CD8-positive, alpha-beta T cell (primary cell): ENCODE measurements at regions of chr17 and their contacts with region 1.

Region 1: DNA sequence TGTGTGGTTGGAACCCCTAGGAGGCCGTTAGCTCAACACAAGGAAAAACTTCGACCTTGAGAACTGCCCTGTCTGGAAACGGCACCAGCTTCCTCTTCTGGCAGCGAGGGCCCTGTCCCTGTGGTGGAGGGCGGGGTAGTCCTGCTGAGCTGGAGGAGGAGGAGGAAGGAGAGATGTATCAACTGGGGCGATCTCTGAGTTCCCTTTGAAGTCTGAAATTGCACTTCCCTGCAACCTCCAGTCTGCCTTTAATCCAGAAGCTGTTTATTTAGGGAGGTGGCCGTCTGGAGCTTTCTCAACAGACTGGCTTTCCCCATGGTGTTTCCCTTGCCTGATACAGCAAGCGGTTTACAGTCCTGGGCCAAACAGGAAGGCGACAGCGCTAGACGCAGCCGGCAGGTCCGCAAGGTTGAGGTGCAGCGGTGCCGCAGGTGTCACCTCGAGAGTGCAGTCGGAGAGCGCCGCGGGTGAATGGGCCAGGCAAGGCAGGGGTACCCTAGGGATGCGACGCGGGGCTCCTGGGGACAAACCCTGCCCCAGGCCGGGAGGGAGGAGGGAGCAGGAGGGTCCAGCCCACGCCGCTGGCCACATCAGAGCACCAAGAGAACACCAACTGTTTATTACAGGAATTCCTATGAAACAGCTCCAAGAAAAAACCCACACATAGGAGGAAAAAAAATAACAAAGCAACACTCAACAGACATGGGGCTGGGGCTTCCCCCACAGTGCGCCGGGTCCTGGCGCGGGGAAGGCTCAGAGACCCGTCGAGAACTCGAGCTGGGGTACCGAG is 11.4 kb upstream of the MRPS23 start:
- DNase-seq: peak in 8 of 9 experiments; percentile 19 to 68 (median 41)
- ATAC-seq: peak; percentile 70
- H3K4me3 ChIP-seq: peak overlapping the region; percentile 34
- H3K4me3 Mint-ChIP-seq: peak overlapping the region; percentile 83
- H3K27ac ChIP-seq: no peak overlapping the region
- H3K27ac Mint-ChIP-seq: peak overlapping the region; percentile 41
- H3K4me1 ChIP-seq: peaks cover 11% of the 10 kb centered on the region
- H3K4me1 Mint-ChIP-seq: peaks cover 14% of the 10 kb centered on the region
- H3K27me3 ChIP-seq: peaks cover 0 to 7% of the 10 kb centered on the region in 2 experiments
- H3K27me3 Mint-ChIP-seq: peaks cover 10% of the 10 kb centered on the region
- CTCF ChIP-seq: no peak

Region 2: GRCh38 chr17:57735706-57736105 is 125.5 kb before region 1 on chr17:
- CTCF ChIA-PET with region 1: no interaction called
- POLR2A ChIA-PET with region 1: no interaction called
- intact Hi-C with region 1: no loop called
- DNase-seq: peak in 2 of 9 experiments; percentile 19 to 35
- ATAC-seq: no peak
- H3K4me3 ChIP-seq: no peak overlapping the region
- H3K4me3 Mint-ChIP-seq: no peak overlapping the region
- H3K27ac ChIP-seq: no peak overlapping the region
- H3K27ac Mint-ChIP-seq: no peak overlapping the region
- H3K4me1 ChIP-seq: no peaks in the 10 kb centered on the region
- H3K4me1 Mint-ChIP-seq: peaks cover 10% of the 10 kb centered on the region
- H3K27me3 ChIP-seq: no peaks in the 10 kb centered on the region
- H3K27me3 Mint-ChIP-seq: no peaks in the 10 kb centered on the region
- CTCF ChIP-seq: peak; percentile 30

Region 3: DNA sequence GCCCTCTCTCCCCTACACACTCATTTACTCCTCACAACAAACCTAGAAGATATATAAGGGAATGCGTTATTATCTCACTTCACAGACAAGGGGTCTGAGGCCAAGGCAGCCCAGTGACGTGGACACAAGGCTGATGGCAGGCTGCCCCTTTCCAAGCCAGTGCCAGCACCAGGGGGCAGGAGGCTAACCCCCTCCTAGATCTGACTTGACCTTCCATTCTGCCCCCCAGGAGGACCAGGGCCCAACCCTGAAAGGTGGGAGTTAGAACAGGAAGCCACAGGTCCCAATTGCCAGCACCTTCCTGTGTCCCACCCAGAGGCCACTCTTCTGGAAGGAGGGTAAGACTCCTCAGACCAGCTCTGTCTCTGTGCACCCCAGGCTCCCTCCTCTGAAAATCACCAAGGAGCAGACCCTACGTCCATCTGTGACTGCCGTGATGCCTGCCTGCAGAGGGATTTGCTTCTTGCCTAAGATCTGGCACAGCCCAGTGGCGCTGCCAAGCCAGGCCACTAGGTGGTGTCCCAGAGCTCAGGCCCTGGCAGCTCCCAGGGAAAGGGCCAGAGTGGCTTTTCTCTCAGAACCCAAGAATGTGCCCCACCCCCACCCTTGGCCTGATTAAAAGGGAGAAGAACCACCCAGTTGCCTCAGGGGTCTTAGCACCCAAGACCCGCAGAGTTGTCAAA is 31.1 kb after region 1 on chr17:
- CTCF ChIA-PET with region 1: interaction called, 19 read pairs
- POLR2A ChIA-PET with region 1: no interaction called
- intact Hi-C with region 1: no loop called
- DNase-seq: peak; percentile 56 to 85 (median 76)
- ATAC-seq: peak; percentile 98
- H3K4me3 ChIP-seq: no peak overlapping the region
- H3K4me3 Mint-ChIP-seq: no peak overlapping the region
- H3K27ac ChIP-seq: no peak overlapping the region
- H3K27ac Mint-ChIP-seq: no peak overlapping the region
- H3K4me1 ChIP-seq: peaks cover 4% of the 10 kb centered on the region
- H3K4me1 Mint-ChIP-seq: peaks cover 6% of the 10 kb centered on the region
- H3K27me3 ChIP-seq: peaks cover 0 to 2% of the 10 kb centered on the region in 2 experiments
- H3K27me3 Mint-ChIP-seq: peaks cover 3% of the 10 kb centered on the region
- CTCF ChIP-seq: peak; percentile 75